SK-N-SH (cell line): ENCODE measurements at regions of chr14 and their contacts with region 1.

Region 1: DNA sequence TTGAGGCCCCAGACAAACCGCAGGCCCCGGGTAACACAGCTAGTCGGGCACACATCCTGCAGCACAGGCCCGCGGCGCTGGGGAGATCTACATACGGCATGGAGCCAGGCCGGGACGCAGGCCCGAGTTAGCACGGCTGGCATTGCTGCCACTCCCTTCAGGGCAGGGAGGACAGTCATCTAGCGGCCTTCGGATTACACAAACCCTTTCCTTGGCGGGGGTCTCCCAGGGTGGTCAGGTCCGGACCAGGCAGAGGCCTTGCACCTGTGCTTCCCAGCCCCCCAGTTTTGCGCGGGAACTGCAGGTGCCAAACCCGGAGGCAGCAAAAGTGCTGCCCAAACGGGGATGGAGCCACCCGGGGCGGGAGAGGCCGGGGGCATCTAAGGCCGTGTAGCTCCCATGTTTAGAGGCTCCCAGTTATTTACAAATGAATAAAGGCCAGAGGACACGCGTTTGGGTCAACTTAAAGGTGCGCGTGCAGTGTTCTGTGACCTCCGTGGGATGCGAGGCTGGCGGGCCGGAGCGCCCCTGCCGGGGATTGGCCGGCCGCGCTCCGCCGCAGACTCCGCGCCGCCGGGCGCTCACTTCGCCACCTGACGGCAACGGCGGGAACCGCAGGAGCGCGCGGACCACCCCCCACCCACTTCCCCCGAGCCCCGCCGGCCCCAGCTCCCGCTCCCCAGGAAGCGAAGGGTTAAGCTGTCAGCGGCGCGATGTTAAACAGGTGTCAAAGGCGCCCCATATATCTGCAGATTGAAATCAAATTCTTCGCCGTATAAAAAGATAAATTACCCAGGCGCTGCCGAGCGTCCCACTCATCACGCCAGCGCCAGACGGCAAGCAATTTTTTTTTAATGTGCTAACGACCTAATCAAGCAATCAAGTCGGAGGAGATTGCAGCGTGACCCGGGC is 18.1 kb downstream of the VSX2 start:
- DNase-seq: peak; percentile 95
- H3K4me3 ChIP-seq: peak overlapping the region; percentile 45 to 81
- H3K27ac ChIP-seq: no peak overlapping the region
- H3K4me1 ChIP-seq: peaks cover 0 to 16% of the 10 kb centered on the region in 2 experiments; a peak in 1 of 4 replicates
- H3K27me3 ChIP-seq: peaks cover 47% of the 10 kb centered on the region
- CTCF ChIP-seq: peak; percentile 83
- EP300 ChIP-seq: peak in 1 of 2 experiments; percentile 74; a peak in 2 of 4 replicates
- RAD21 ChIP-seq: peak; percentile 40

Region 2: GRCh38 chr14:74140374-74140850 is 116.9 kb before region 1 on chr14:
- CTCF ChIA-PET with region 1: interaction called, 28 read pairs
- POLR2A ChIA-PET with region 1: no interaction called
- DNase-seq: peak; percentile 60
- H3K4me3 ChIP-seq: no peak overlapping the region
- H3K27ac ChIP-seq: no peak overlapping the region
- H3K4me1 ChIP-seq: peaks cover 0 to 8% of the 10 kb centered on the region in 2 experiments; a peak in 2 of 4 replicates
- H3K27me3 ChIP-seq: no peaks in the 10 kb centered on the region
- CTCF ChIP-seq: no peak
- EP300 ChIP-seq: peak in 1 of 2 experiments; percentile 80; a peak in 2 of 4 replicates
- RAD21 ChIP-seq: no peak

Region 3: DNA sequence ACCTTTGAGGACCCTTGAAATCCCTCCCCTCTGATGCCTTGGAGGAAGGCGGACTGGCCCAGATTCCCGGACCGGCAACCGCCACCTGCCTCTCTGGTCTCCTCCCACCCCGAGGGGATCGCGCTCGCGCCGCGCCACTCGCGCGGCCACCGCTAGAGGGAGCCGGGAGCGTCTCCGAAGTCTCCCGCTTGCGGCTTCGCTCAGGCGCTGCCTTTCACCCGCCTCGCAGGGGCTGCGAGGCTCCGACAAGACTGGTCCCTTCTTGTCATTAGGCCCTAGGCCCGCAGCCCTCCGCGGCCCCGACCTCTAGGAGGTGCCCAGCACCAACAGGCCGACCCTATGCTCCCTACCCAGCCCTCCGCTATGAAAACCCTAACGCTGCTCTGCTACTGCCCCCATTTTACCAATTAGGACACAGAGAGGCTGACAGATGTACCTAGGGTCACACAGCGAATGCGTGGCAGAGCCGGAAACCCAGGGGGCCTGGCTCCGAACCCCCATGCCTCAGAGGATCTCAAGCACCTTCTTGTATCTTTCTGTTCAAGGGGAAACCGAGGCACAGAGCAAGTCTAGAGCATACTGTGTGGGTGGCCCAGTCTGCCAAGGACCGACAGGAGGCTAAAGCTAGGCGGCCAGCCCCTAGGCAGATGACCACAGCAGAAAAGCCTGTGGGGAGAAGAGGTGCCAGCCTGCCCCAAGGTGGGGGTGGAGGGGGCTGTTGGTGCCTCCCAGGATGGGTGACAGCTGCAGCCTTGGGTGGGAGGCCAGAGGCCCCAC is 39.5 kb before region 1 on chr14:
- CTCF ChIA-PET with region 1: interaction called, 64 read pairs
- POLR2A ChIA-PET with region 1: no interaction called
- DNase-seq: peak; percentile 94
- H3K4me3 ChIP-seq: peak overlapping the region; percentile 29 to 49; a peak in 3 of 4 replicates
- H3K27ac ChIP-seq: no peak overlapping the region
- H3K4me1 ChIP-seq: peaks cover 0 to 2% of the 10 kb centered on the region in 2 experiments; a peak in 1 of 4 replicates
- H3K27me3 ChIP-seq: peaks cover 39% of the 10 kb centered on the region
- CTCF ChIP-seq: peak; percentile 87
- EP300 ChIP-seq: no peak
- RAD21 ChIP-seq: peak; percentile 58

Region 4: DNA sequence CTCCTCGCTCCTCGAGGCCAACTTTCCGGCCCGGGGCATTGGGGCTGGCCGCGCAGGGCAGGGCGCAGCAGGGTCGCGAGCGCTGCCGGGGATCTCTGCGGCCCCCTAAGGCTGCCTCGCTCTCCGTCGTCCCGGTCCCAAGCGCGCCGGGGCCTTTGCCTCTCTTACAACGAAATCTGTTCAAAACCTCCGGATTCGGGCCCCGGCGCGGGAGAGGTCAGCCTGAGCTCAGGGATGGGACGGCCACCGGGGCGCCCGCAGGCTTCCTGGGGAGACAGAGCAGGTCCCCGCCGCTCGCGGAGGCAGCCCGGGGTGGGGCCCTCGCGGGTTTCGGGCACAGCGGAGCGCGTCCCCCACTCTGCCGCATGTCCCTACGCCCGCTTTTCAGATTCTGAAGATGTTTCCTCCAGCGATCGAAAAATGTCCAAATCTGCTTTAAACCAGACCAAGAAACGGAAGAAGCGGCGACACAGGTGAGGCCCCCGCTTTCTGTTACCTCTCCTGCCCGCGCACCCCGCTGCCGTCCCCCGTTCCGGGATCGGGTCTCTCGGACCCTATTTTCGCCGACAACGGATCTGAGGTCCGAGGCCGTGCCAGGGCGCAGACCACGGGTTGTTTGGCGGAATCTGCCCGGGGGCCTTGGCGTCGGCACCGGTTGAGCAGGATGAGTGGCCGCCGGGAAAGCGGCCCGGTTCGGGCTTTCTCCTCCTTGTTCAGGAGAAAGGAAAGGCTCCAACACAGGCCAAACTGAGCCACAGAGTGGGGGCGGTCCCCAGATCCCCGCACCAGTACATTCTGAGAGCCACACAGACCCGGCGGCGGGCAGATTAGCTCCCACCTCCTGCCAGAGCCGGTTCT is 16.3 kb before region 1 on chr14:
- CTCF ChIA-PET with region 1: interaction called, 30 read pairs
- POLR2A ChIA-PET with region 1: no interaction called
- DNase-seq: peak; percentile 71
- H3K4me3 ChIP-seq: no peak overlapping the region
- H3K27ac ChIP-seq: no peak overlapping the region
- H3K4me1 ChIP-seq: no peaks in the 10 kb centered on the region; a peak in 1 of 4 replicates
- H3K27me3 ChIP-seq: peaks cover 91% of the 10 kb centered on the region
- CTCF ChIP-seq: no peak
- EP300 ChIP-seq: no peak
- RAD21 ChIP-seq: no peak

Region 5: DNA sequence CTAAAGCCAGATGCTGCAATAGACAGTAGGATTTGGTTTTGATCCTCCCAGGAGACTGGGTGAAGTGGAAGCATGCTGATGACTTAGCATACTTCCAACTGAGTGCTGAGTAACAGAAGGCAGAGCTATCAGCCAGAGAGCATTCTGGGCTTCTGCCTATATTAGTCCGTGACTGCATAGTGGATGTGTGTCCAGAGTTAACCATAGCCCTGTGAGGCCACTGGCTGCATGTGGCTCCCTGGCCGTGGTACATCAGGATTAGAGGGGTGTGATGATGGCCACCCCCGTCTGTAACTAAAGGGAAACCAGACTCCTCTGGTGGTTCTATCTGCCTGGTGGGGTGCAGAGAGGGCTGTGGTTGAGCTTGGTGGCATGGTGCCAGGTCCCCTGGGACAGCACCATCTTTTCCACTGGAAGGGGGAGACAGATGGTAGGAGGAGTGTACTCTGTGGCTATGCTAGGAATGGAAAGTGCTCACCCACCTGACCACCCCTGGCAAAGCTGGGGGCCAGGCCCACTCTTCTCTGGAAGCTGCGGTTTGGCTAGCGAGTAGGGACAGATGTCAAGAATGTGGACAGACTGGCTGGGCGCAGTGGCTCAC is 18.0 kb after region 1 on chr14:
- CTCF ChIA-PET with region 1: interaction called, 35 read pairs
- POLR2A ChIA-PET with region 1: no interaction called
- DNase-seq: no peak
- H3K4me3 ChIP-seq: no peak overlapping the region
- H3K27ac ChIP-seq: no peak overlapping the region
- H3K4me1 ChIP-seq: no peaks in the 10 kb centered on the region
- H3K27me3 ChIP-seq: no peaks in the 10 kb centered on the region
- CTCF ChIP-seq: no peak
- EP300 ChIP-seq: no peak
- RAD21 ChIP-seq: no peak

Region 6: DNA sequence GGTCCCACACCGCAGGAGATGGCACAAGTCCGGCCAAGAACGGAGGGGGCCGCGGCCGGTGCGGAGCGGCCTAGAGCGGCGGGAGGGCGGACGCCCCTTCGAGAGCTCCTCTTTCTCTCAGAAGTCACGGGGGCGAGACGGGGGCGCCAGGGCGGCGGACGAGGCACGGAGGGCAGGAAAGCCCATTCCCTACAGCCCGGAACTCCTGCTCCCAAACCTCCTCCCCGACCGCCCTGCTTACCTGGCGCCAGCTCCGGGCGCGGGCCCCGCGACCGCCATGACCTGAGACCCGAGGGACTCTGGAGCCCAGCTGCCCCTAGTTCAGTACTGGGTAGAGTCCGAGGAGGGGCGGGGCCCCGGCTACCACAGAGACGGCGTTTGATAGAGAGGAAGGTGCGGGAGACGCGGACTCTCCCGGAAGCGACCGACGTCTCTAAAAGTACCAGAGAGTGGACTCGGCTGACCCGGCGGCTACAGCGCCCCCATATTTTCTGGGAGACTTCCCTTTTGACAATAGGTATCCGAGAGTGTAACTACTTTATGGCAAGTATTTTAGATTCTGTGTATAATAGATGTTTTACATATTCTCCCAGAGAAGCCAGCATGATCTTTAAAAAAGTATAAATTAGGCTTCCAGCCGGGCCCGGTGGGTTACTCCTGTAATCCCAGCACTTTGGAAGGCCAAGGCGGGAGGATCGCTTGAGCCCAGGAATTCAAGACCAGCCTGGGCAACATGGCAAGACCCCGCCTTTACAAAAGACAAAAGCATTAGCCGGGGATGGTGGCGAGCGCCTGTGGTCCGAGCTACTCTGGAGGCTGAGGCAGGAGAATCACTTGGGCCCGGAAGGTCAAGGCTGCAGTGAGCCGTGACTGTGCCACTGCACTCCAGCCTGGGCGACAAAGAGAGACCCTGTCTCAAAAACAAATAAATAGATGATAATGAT is 45.6 kb after region 1 on chr14 and contains the start of gene ABCD4:
- CTCF ChIA-PET with region 1: interaction called, 10 read pairs
- POLR2A ChIA-PET with region 1: interaction called, 3 read pairs
- DNase-seq: peak; percentile 94
- H3K4me3 ChIP-seq: peak within 1 kb of the TSS; percentile 69 to 99
- H3K27ac ChIP-seq: peak within 1 kb of the TSS; percentile 72 to 77
- H3K4me1 ChIP-seq: no peaks in the 10 kb centered on the region; a peak in 1 of 4 replicates
- H3K27me3 ChIP-seq: no peaks in the 10 kb centered on the region
- CTCF ChIP-seq: peak; percentile 81
- EP300 ChIP-seq: 0 out of 4 replicates have a peak, but pooled peaks of 1 of the 2 experiments have one; percentile 9
- RAD21 ChIP-seq: no peak
- polyA plus RNA-seq, gene ABCD4: 25.5 and 37.0 TPM in 2 replicates

Region 7: DNA sequence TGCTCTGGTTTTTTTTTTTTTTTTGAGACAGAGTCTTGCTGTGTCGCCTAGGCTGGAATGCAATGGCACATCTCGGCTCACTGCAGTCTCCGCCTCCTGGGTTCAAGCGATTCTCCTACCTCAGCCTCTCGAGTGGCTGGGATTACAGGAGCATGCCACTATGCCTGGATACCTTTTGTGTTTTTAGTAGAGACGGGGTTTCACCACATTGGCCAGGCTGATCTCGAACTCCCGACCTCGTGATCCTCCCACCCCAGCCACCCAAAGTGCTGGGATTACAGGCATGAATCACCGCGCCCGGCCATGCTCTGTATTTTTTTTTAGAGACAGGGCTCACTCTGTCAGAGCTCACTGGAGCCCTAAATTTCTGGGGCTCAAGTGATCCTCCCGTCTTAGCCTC is 123.5 kb after region 1 on chr14:
- CTCF ChIA-PET with region 1: no interaction called
- POLR2A ChIA-PET with region 1: no interaction called
- DNase-seq: no peak
- H3K4me3 ChIP-seq: no peak overlapping the region
- H3K27ac ChIP-seq: no peak overlapping the region
- H3K4me1 ChIP-seq: no peaks in the 10 kb centered on the region
- H3K27me3 ChIP-seq: peaks cover 2% of the 10 kb centered on the region; the same call in 1 of the 2 replicates
- CTCF ChIP-seq: no peak
- EP300 ChIP-seq: no peak
- RAD21 ChIP-seq: no peak